Activated T-helper 2 cell treated with anti-CD3 and anti-CD28 coated beads, Interferon-gamma antibody, Interleukin-2, Interleukin-4, amounts not matched to agents 10 μg/mL and 5 μg/mL and 100 μg/mL, durations not matched to agents 14 hours and 24 hours and 36 hours (primary cell): ENCODE measurements at regions of chr6 and their contacts with region 1.

Region 1: GRCh38 chr6:84227434-84228197 is at the start of gene CEP162:
- DNase-seq: peak; percentile 85
- H3K4me3 Mint-ChIP-seq: peak within 1 kb of the TSS; percentile 97
- H3K27ac Mint-ChIP-seq: peak within 1 kb of the TSS; percentile 87
- H3K4me1 Mint-ChIP-seq: peaks cover 17% of the 10 kb centered on the region
- H3K27me3 Mint-ChIP-seq: peaks cover 12% of the 10 kb centered on the region
- total RNA-seq, gene CEP162: 3.3 and 4.2 TPM in 2 replicates

Region 2: GRCh38 chr6:83859410-83860358 is 367.9 kb before region 1 on chr6 and contains the start of gene CYB5R4:
- intact Hi-C with region 1: loop called (anchors 1 kb)
- DNase-seq: peak; percentile 94
- H3K4me3 Mint-ChIP-seq: peak within 1 kb of the TSS; percentile 98
- H3K27ac Mint-ChIP-seq: peak within 1 kb of the TSS; percentile 84
- H3K4me1 Mint-ChIP-seq: peaks cover 25% of the 10 kb centered on the region
- H3K27me3 Mint-ChIP-seq: peaks cover 12% of the 10 kb centered on the region
- total RNA-seq, gene CYB5R4: 28.9 and 29.9 TPM in 2 replicates